ENCODE measurements at regions of chr4 and their contacts with region 1.

Region 1: DNA sequence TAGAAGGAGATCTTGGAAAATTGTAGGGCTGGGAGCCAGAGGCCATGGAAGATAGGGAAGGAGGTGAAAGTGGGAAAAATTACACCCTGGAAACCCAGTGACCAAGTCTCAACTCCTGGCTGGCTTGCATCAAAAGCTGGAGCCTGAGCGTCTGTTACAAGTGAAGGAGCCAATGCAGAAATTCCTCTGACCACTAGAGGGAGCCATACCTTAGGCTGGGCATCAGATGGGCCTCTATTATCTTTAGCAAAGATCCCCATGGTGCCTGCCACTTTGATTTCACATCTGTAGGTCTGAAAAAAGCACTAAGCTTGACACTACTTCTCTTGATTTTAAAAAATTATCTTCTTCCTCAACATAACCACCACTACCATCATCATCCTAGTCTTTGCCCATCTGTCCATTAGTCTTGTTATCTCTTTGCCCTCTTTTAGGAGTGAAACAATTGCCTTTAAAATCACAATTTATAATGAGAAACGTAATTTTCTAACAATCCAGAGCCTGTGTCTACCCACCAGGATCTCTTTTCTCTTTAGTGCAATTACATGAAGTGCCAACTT is 62.9 kb downstream of the ANAPC4 start:
- DNase-seq: peak; percentile 75
- ATAC-seq: peak; percentile 77
- H3K4me3 Mint-ChIP-seq: no peak overlapping the region
- H3K27ac Mint-ChIP-seq: no peak overlapping the region
- H3K4me1 Mint-ChIP-seq: no peaks in the 10 kb centered on the region
- H3K27me3 Mint-ChIP-seq: no peaks in the 10 kb centered on the region
- CTCF ChIP-seq: peak; percentile 63

Region 2: GRCh38 chr4:25512505-25512904 is 72.5 kb after region 1 on chr4:
- CTCF ChIA-PET with region 1: no interaction called
- POLR2A ChIA-PET with region 1: no interaction called
- intact Hi-C with region 1: no loop called
- DNase-seq: no peak
- ATAC-seq: no peak
- H3K4me3 Mint-ChIP-seq: no peak overlapping the region
- H3K27ac Mint-ChIP-seq: no peak overlapping the region
- H3K4me1 Mint-ChIP-seq: no peaks in the 10 kb centered on the region
- H3K27me3 Mint-ChIP-seq: peaks cover 2% of the 10 kb centered on the region
- CTCF ChIP-seq: no peak

Region 3: GRCh38 chr4:25767877-25768725 is 328.1 kb after region 1 on chr4:
- CTCF ChIA-PET with region 1: interaction called, 23 read pairs
- POLR2A ChIA-PET with region 1: no interaction called
- intact Hi-C with region 1: no loop called
- DNase-seq: peak; percentile 45
- ATAC-seq: no peak
- H3K4me3 Mint-ChIP-seq: no peak overlapping the region
- H3K27ac Mint-ChIP-seq: no peak overlapping the region
- H3K4me1 Mint-ChIP-seq: no peaks in the 10 kb centered on the region
- H3K27me3 Mint-ChIP-seq: no peaks in the 10 kb centered on the region
- CTCF ChIP-seq: peak; percentile 34

Region 4: DNA sequence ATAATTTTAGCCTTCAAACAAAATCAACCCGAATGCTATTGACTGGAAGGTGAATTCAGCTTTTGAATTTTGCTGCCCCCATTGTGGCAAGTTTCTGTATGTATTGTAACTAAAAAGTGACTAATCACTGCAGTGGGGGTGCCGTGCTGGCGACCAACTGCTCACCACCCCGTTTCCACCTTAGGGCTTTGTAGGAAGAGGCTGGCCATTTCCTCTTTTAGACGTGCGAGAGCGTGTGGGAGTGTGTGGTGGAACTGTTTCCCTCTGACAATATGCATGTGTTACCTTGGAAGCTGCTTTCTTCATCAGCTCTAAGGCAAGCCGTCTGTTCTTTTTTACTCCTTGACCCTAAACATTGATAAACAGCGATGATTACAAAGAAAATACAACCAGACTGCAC is 343.9 kb after region 1 on chr4:
- CTCF ChIA-PET with region 1: interaction called, 3 read pairs
- POLR2A ChIA-PET with region 1: no interaction called
- intact Hi-C with region 1: loop called (anchors 10 kb)
- DNase-seq: peak; percentile 70
- ATAC-seq: peak; percentile 79
- H3K4me3 Mint-ChIP-seq: no peak overlapping the region
- H3K27ac Mint-ChIP-seq: peak overlapping the region; percentile 51
- H3K4me1 Mint-ChIP-seq: peaks cover 11% of the 10 kb centered on the region
- H3K27me3 Mint-ChIP-seq: no peaks in the 10 kb centered on the region
- CTCF ChIP-seq: no peak